ENCODE measurements at regions of chr22 and their contacts with region 1.

Region 1: DNA sequence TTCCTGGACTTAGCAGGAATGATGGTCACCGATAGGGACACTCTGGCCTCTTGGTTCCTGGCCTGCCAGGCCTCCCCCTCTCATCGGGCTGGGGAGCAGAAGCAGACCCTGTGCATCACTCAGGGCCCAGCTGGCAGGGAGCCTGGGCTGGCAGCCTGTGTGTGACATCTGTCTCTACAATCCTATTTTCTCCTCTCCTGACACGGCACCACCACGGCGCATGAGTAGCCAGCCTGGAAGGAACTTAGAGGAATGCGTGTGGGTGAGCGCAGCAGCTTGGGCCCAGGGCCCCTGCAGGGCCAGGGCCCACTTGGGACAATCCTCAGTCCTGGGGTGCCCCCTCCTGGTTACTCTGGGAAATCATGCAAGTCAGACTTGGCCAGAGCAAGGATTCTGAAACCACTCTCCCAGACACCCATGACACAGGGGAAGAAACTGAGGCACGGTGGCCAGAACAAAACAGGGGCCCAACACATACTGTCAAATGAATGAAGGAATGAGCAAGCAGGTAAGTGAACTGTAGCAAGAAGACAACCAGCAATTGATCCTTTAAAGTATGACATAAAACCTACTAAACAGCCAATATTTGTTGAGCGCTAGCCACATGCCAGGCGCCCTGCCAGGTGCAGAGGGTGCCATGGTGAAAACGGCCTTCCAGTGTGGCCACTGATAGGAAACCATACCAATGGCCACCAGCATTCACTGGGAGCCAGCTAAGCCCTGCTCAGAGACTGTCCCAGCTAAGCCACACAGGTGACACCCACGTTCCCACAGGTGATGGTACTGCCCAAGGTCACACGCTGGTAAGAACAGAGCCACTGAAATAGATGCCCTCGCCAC is 13.3 kb downstream of the RSPH14 start:
- DNase-seq: peak; percentile 42 to 82 (median 72)
- ATAC-seq: peak; percentile 75 to 95 (median 93)
- H3K4me3 ChIP-seq: no peak overlapping the region
- H3K27ac ChIP-seq: no peak overlapping the region
- H3K4me1 ChIP-seq: peaks cover 0 to 5% (median 0%) of the 10 kb centered on the region in 3 donors
- H3K27me3 ChIP-seq: no peaks in the 10 kb centered on the region
- CTCF ChIP-seq: peak; percentile 55 to 66 (median 58)

Region 2: DNA sequence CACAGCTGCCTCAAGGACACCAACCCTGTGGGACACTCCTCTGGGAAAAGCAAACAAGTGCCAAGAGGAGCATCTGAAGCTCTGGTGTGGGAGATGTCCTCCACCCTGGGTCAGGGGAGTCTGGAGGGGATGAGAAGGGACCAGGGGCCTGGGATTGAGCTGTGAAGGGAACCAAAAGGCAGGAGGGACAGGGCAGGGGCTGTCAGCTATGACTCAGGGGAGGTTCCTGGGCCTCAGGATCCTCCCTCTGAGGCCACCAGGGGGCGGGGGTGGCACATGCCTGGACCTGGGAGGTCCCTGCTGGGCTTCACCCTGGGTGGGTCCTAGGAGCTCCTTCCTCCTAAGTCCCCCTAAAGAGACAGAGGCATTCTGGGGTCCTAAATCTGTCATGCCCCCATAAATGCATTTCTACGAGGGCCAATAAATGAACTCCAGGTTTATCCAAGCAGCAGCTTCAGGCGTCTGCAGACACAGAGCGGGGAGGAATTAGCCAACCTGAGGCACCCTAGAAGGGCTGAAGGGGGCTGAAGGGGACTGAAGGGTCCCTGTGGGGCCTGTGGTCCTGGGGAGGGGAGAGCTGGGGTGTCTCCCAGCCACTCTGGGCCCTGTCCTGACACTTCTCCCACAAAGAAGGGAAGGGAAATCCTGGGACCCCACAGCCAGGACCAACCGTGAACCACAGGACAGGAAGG is 272.7 kb before region 1 on chr22:
- intact Hi-C with region 1: loop called in 1 of 3 experiments (anchors 10 kb)
- DNase-seq: no peak
- ATAC-seq: peak in 2 of 4 donors; percentile 41 to 48
- H3K4me3 ChIP-seq: no peak overlapping the region
- H3K27ac ChIP-seq: no peak overlapping the region
- H3K4me1 ChIP-seq: no peaks in the 10 kb centered on the region
- H3K27me3 ChIP-seq: no peaks in the 10 kb centered on the region
- CTCF ChIP-seq: peak in 2 of 4 donors; percentile 5 to 15

Region 3: GRCh38 chr22:23047265-23047664 is 81.2 kb before region 1 on chr22:
- intact Hi-C with region 1: no loop called
- DNase-seq: peak in 1 of 6 donors; percentile 23
- ATAC-seq: no peak
- H3K4me3 ChIP-seq: no peak overlapping the region
- H3K27ac ChIP-seq: no peak overlapping the region
- H3K4me1 ChIP-seq: no peaks in the 10 kb centered on the region
- H3K27me3 ChIP-seq: no peaks in the 10 kb centered on the region
- CTCF ChIP-seq: no peak